Motor neuron (in vitro differentiated cells): ENCODE measurements at regions of chr1 and their contacts with region 1.

Region 1: GRCh38 chr1:204506961-204507387 is 9.2 kb upstream of the MDM4 start:
- ATAC-seq: peak; percentile 76 to 88 (median 78)
- H3K4me3 ChIP-seq: peak overlapping the region; percentile 41 to 60 (median 47)
- H3K27ac ChIP-seq: peak overlapping the region; percentile 79 to 82
- H3K4me1 ChIP-seq: peaks cover 9% of the 10 kb centered on the region in 2 donors

Region 2: GRCh38 chr1:204431310-204432165 is 75.4 kb before region 1 on chr1:
- in situ Hi-C with region 1: loop called in 2 of 9 experiments (anchors 5 to 10 kb)
- ATAC-seq: peak; percentile 69 to 98 (median 82)
- H3K4me3 ChIP-seq: no peak overlapping the region
- H3K27ac ChIP-seq: no peak overlapping the region
- H3K4me1 ChIP-seq: no peaks in the 10 kb centered on the region

Region 3: GRCh38 chr1:204438628-204439027 is 68.3 kb before region 1 on chr1:
- in situ Hi-C with region 1: loop called in 7 of 9 experiments (anchors 5 to 10 kb)
- ATAC-seq: peak in 2 of 8 experiments; percentile 9 to 61
- H3K4me3 ChIP-seq: no peak overlapping the region
- H3K27ac ChIP-seq: no peak overlapping the region
- H3K4me1 ChIP-seq: no peaks in the 10 kb centered on the region

Region 4: GRCh38 chr1:204446370-204447111 is 60.4 kb before region 1 on chr1:
- in situ Hi-C with region 1: loop called in 7 of 9 experiments (anchors 5 to 10 kb)
- ATAC-seq: peak; percentile 64 to 97 (median 96)
- H3K4me3 ChIP-seq: no peak overlapping the region
- H3K27ac ChIP-seq: peak overlapping the region; percentile 60 to 76
- H3K4me1 ChIP-seq: peaks cover 17 to 18% of the 10 kb centered on the region in 2 donors